Right cardiac atrium (tissue), 5 donors: ENCODE measurements at regions of chr2 and their contacts with region 1.

Region 1: GRCh38 chr2:191051825-191052778 is 38.1 kb upstream of the STAT1 start:
- DNase-seq: no peak
- ATAC-seq: peak; percentile 44 to 49
- H3K4me3 ChIP-seq: no peak overlapping the region
- H3K27ac ChIP-seq: no peak overlapping the region
- H3K4me1 ChIP-seq: no peaks in the 10 kb centered on the region
- H3K27me3 ChIP-seq: no peaks in the 10 kb centered on the region

Region 2: GRCh38 chr2:190880378-190881073 is 171.6 kb before region 1 on chr2 and contains the start of gene GLS:
- intact Hi-C with region 1: no loop called
- DNase-seq: peak; percentile 95 to 98 (median 98)
- ATAC-seq: peak; percentile 96 to 97
- H3K4me3 ChIP-seq: peak within 1 kb of the TSS; percentile 90
- H3K27ac ChIP-seq: peak within 1 kb of the TSS; percentile 100
- H3K4me1 ChIP-seq: peaks cover 2% of the 10 kb centered on the region
- H3K27me3 ChIP-seq: no peaks in the 10 kb centered on the region
- total RNA-seq, gene GLS: 79.8 to 106 (median 91.5) TPM

Region 3: GRCh38 chr2:191013932-191014652 is 38.0 kb before region 1 on chr2 and contains the start of gene STAT1:
- intact Hi-C with region 1: no loop called
- DNase-seq: peak; percentile 94 to 98 (median 97)
- ATAC-seq: peak; percentile 97
- H3K4me3 ChIP-seq: peak within 1 kb of the TSS; percentile 83
- H3K27ac ChIP-seq: peak within 1 kb of the TSS; percentile 90
- H3K4me1 ChIP-seq: peaks cover 6% of the 10 kb centered on the region
- H3K27me3 ChIP-seq: no peaks in the 10 kb centered on the region
- total RNA-seq, gene STAT1: 45.9 to 73.2 (median 61.8) TPM

Region 4: GRCh38 chr2:191150600-191151330 is 98.7 kb after region 1 on chr2 and contains the start of gene STAT4:
- intact Hi-C with region 1: loop called (anchors 5 kb)
- DNase-seq: peak in 2 of 3 donors; percentile 62 to 73
- ATAC-seq: peak; percentile 71 to 74
- H3K4me3 ChIP-seq: peak within 1 kb of the TSS; percentile 60
- H3K27ac ChIP-seq: peak within 1 kb of the TSS; percentile 49
- H3K4me1 ChIP-seq: no peaks in the 10 kb centered on the region
- H3K27me3 ChIP-seq: no peaks in the 10 kb centered on the region
- total RNA-seq, gene STAT4: 7.0 to 27.0 (median 18.2) TPM

Region 5: DNA sequence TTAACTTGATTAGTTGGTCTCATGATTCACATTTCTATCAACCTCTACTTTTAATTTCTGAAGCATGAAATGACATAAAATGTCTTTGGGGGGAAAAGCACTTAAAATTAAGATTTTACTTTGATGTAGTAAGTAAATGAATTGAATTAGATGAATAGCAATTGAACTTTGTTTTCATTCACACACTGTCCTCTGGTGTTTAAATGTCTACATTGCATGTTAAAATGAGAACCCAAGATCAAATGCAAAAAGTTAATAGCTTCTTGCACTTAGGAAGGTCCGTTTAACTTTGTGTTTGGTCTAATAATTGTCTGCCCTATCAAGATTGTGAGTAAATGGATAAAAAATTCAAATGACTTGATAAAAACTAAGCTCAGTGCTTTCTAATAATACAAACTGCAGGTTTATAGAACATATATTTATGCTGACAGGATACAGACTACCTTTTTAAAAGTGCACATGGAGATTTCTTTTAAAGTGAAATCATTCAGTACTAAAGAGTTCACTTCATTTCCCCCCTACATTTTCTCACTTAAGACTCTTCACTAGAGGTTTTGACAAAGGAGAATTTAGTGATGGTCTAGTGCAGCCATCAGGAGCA is 469.6 kb after region 1 on chr2:
- intact Hi-C with region 1: loop called in 1 of 4 experiments (anchors 10 kb)
- DNase-seq: no peak
- ATAC-seq: no peak
- H3K4me3 ChIP-seq: no peak overlapping the region
- H3K27ac ChIP-seq: no peak overlapping the region
- H3K4me1 ChIP-seq: no peaks in the 10 kb centered on the region
- H3K27me3 ChIP-seq: no peaks in the 10 kb centered on the region

Region 6: GRCh38 chr2:192073878-192074277 is 1021.8 kb after region 1 on chr2:
- intact Hi-C with region 1: no loop called
- DNase-seq: no peak
- ATAC-seq: no peak
- H3K4me3 ChIP-seq: no peak overlapping the region
- H3K27ac ChIP-seq: no peak overlapping the region
- H3K4me1 ChIP-seq: no peaks in the 10 kb centered on the region
- H3K27me3 ChIP-seq: no peaks in the 10 kb centered on the region